Breast epithelium (tissue), 4 donors: ENCODE measurements at regions of chr13 and their contacts with region 1.

Region 1: DNA sequence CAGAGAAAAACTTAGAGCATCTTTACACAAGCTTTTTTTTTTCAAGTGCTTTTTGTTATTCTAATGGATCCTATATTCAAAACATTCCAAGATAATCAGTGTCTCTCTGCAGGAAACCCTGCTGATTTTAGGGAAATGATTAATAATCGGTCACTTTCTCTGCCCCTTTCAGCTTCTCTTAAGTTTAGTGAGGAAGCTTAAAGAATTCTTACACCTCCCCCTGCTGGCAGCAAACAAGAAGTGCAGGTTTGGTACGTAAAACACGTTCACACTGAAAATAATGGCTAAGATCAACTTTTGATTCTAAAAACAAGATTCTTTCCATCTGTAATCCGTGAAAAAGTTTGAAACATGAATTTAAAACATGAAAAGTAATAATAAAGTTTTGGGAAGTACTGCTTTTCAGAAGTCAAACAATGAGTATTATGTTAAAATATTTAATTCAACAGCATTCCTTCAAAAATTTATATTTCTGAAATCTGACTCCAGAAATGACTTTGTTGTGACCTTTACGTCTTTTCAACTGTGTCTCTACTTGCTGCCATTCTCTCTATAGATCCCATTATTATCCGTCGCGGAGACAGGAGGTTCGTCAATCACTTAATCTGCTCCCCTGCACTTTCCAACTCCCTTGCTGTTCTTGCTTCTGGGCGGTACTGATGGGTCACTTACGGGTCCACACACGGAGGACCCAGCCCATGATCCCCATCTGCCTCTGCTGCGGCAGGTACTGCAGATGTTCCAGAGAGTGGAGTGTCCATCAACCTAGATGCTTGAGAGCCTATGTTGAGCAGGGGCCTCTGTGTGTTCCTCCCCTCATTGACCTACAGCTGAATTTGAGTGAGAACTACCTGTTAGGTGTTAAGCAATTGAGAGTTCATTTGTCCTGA is 203.1 kb upstream of the EDNRB start:
- DNase-seq: no peak
- H3K4me3 ChIP-seq: no peak overlapping the region
- H3K27ac ChIP-seq: no peak overlapping the region
- H3K4me1 ChIP-seq: no peaks in the 10 kb centered on the region
- H3K27me3 ChIP-seq: no peaks in the 10 kb centered on the region
- CTCF ChIP-seq: peak; percentile 65 to 95 (median 85)
- POLR2A ChIP-seq: no peak

Region 2: DNA sequence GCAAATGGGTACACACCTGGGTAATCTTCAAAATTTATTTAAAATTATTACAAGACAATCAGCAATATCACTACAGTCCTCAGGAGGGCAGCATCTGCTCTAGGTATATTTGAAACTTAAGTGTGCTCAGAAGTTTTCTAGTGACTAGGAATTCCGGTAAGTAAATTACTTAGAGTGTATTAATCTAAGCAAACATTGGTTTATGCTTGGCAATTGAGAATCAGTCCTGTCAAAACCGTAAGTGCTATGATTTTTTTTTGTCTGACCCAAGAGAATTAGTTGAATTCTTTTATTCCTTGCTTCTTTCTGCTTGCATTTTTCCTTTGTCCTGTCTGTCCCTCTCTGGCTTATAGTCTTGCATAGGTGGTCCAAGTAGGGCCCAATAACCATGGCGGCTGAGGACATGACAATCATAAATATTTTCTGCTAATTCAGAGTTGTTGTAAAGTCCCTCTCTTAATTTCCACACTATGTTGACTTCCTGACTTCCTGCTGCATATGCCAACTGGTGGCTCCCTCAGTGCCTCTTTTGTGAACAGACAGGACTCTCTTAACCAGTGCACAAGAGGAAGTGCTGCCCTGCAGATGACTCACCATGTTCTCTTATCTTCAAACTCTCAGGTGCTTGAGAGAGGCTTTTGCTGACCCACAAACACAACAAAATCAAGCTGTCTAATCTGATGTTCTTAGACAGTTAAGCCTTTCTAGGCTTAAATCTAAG is 342.0 kb before region 1 on chr13:
- intact Hi-C with region 1: loop called (anchors 5 kb)
- DNase-seq: no peak
- H3K4me3 ChIP-seq: no peak overlapping the region
- H3K27ac ChIP-seq: no peak overlapping the region
- H3K4me1 ChIP-seq: no peaks in the 10 kb centered on the region
- H3K27me3 ChIP-seq: no peaks in the 10 kb centered on the region
- CTCF ChIP-seq: peak; percentile 34 to 70 (median 42)
- POLR2A ChIP-seq: no peak

Region 3: GRCh38 chr13:78137404-78138142 is 15.9 kb after region 1 on chr13:
- intact Hi-C with region 1: no loop called
- DNase-seq: no peak
- H3K4me3 ChIP-seq: no peak overlapping the region
- H3K27ac ChIP-seq: no peak overlapping the region
- H3K4me1 ChIP-seq: no peaks in the 10 kb centered on the region
- H3K27me3 ChIP-seq: no peaks in the 10 kb centered on the region
- CTCF ChIP-seq: peak in 2 of 3 donors; percentile 34 to 51
- POLR2A ChIP-seq: no peak

Region 4: DNA sequence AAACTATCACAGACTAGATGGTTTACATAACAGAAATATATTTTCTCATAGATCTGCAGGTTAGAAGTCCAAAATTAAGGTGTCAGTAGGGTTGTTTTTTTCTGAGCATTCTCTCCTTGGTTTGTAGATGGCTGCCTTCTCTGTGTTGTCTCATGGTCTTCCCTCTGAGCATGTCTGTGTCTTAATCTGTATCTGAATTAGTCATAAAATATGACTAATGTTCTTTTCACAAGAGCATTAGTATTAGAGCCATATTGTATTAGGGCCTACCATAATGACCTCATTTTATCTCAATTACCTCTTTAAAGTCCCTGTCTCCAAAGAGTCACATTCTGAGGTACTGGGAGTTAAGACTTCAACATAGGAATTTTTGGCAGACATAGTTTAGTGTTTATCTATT is 614.4 kb after region 1 on chr13:
- intact Hi-C with region 1: no loop called
- DNase-seq: no peak
- H3K4me3 ChIP-seq: no peak overlapping the region
- H3K27ac ChIP-seq: no peak overlapping the region
- H3K4me1 ChIP-seq: no peaks in the 10 kb centered on the region
- H3K27me3 ChIP-seq: no peaks in the 10 kb centered on the region
- CTCF ChIP-seq: no peak
- POLR2A ChIP-seq: no peak